GM13976 (cell line): ENCODE measurements at regions of chr18 and their contacts with region 1.

Region 1: GRCh38 chr18:63936156-63936931 is 12.8 kb upstream of the HMSD start:
- DNase-seq: peak; percentile 88
- CTCF ChIP-seq: peak; percentile 62

Region 2: GRCh38 chr18:63848159-63848558 is 88.2 kb before region 1 on chr18:
- in situ Hi-C with region 1: loop called (anchors 10 kb)
- DNase-seq: no peak
- CTCF ChIP-seq: peak; percentile 65